Activated CD4-positive, alpha-beta memory T cell treated with anti-CD3 and anti-CD28 coated beads for 36 hours (primary cell): ENCODE measurements at regions of chr6 and their contacts with region 1.

Region 1: DNA sequence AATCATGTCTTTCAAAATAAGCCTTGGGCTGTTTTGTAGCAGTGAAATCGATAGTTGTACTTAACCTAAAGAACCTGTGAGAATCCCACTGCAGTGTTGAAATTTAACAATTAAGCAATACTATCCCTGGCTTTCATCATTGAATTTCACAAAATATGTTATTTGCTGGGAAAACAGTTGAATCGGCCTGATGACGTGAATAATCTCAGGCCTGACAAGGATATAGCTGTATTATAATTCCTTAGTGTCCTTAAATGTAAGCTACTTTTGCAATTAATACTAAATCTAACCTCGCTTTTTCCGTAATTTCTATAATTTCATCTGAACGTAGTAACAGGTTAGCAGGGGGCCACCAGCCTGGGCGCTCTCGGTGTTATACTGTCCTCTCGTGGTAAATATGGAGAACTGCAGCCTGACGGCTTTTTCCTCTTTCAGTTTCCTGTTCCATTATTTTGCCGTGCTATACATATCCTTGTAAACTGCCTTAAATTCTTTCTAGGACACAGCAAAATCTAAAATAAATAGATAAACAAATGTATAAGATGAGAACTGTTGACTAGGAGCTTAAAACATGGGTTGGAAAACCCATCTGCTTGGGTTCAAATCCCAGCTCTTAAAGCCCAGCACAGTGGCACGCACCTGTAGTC is 24.0 kb downstream of the MTFR2 start:
- DNase-seq: peak; percentile 59
- H3K4me3 Mint-ChIP-seq: no peak overlapping the region
- H3K27ac Mint-ChIP-seq: no peak overlapping the region
- H3K4me1 Mint-ChIP-seq: peaks cover 4% of the 10 kb centered on the region
- H3K27me3 Mint-ChIP-seq: no peaks in the 10 kb centered on the region

Region 2: GRCh38 chr6:135451693-135452092 is 774.5 kb before region 1 on chr6:
- CTCF ChIA-PET with region 1: interaction called, 9 read pairs
- POLR2A ChIA-PET with region 1: no interaction called
- intact Hi-C with region 1: loop called (anchors 1 kb)
- DNase-seq: no peak
- H3K4me3 Mint-ChIP-seq: no peak overlapping the region
- H3K27ac Mint-ChIP-seq: no peak overlapping the region
- H3K4me1 Mint-ChIP-seq: no peaks in the 10 kb centered on the region
- H3K27me3 Mint-ChIP-seq: no peaks in the 10 kb centered on the region

Region 3: DNA sequence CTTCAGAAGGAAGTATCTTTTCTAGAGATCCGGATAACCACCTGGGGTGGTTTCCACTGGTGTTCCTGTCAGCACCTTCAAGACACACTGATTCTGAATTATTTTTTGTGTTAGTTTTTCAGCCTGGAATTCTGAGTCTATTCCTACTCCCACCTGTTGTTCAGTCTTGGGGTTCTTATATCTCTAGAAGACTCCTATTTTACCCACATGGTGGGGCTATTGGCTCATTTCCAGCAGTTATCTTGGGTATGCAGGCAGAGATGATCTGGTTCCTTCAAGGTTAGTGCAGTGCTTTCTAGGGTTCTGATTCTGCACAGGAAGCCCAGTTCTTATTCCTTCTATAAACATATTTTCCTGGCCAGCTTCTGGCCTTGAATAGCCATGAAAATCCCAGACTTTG is 550.3 kb before region 1 on chr6:
- CTCF ChIA-PET with region 1: interaction called, 14 read pairs
- POLR2A ChIA-PET with region 1: no interaction called
- intact Hi-C with region 1: loop called (anchors 2 kb)
- DNase-seq: peak; percentile 13
- H3K4me3 Mint-ChIP-seq: no peak overlapping the region
- H3K27ac Mint-ChIP-seq: no peak overlapping the region
- H3K4me1 Mint-ChIP-seq: no peaks in the 10 kb centered on the region
- H3K27me3 Mint-ChIP-seq: no peaks in the 10 kb centered on the region

Region 4: DNA sequence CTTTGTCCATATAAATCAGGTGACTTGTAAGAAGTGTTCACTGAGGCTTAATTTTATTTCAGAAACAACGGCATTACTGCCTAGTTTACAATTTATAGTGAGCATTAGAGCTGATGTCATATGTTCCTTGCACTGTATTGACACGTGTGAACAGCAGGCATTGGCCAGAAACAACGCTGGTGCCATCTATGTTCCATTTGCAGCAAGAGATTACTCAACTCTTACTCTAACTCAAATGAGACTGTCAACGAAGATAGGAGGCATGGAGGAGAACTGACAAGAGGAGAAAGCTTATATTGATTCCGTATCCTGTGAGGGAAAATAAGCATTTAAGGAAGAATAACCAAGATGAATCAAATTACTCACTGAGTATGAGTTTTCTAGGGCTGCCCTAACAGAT is 24.4 kb before region 1 on chr6:
- CTCF ChIA-PET with region 1: interaction called, 11 read pairs
- POLR2A ChIA-PET with region 1: no interaction called
- intact Hi-C with region 1: no loop called
- DNase-seq: no peak
- H3K4me3 Mint-ChIP-seq: no peak overlapping the region
- H3K27ac Mint-ChIP-seq: no peak overlapping the region
- H3K4me1 Mint-ChIP-seq: no peaks in the 10 kb centered on the region
- H3K27me3 Mint-ChIP-seq: peaks cover 6% of the 10 kb centered on the region

Region 5: DNA sequence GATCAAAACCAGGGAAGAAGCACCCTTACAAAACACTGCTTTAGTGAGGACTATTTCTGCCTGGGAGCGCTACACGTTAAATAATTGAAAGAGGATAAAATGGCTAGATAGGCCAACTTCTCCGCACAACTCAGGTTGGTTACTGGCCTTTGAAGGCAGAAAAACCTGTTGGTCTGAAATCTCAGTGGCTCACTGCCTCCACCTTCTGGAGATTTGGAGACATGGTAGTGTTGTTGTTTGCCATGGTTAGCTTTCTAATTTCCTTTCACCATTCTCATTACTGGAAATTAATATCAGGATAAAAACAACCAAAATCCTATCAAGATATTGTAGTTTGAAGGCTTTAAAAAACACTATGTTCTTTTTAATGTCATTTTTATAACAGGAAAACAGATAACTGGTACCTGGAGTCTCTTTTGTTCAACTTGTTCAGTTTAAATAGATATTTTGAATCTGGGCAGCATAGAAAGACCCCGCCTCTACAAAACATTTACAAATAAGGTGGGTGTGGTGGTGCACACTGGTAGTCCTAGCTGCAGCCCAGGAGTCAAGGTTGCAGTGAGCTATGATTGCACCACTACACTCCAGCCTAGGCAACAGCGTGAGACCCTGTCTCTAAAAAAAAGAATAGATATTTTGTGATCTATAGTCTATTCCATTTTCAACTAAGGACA is 91.0 kb after region 1 on chr6:
- CTCF ChIA-PET with region 1: interaction called, 8 read pairs
- POLR2A ChIA-PET with region 1: no interaction called
- intact Hi-C with region 1: loop called (anchors 2 kb)
- DNase-seq: peak; percentile 69
- H3K4me3 Mint-ChIP-seq: no peak overlapping the region
- H3K27ac Mint-ChIP-seq: no peak overlapping the region
- H3K4me1 Mint-ChIP-seq: no peaks in the 10 kb centered on the region
- H3K27me3 Mint-ChIP-seq: no peaks in the 10 kb centered on the region